ENCODE measurements at regions of chr3 and their contacts with region 1.

Region 1: GRCh38 chr3:134197681-134198261 is 52.9 kb downstream of the RYK start:
- DNase-seq: peak; percentile 68
- H3K27ac ChIP-seq: no peak overlapping the region
- CTCF ChIP-seq: peak; percentile 81

Region 2: DNA sequence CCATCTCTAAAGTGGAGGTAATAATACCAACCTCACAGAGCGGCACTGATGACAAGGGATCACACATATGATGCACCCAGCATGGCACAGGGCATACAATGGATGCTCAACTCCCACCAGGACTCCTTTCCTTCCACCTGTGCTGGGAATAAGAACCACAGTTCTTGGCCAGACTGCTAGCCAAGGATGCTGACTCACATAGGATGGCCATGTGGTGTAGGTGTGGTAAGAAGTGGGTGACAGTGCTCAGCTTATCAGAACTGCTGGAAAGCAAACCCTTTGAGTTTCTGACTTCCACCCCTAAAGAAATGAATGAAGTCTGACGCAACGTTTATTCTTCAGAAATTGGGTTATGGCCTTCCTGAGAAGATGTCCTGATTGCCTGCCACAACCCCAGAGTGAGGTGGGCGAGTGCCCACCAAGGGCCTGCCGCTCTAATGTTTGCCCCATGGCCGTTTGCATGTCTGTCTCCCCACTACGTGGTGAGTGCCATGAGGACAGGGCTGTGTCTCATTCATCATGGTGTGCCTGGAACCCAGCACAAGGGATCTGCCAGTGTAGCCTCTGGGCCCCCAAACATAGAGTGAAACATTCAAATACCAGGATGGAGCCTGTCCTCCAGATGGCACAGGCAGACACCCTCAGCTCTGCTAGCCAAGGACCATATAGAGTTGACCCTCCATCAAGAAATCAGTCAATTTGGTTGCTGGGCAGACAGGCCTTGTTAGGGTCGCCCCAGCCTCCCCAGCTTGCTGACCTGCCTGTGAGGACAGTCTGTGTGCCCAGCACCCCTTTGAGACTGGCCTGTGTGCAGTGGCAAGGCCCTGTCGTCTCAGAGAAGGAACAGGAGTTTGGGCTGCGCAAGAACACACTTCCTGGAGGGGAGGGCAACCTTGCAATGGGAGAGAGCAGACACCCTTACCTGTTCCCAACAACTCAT is 110.5 kb before region 1 on chr3:
- CTCF ChIA-PET with region 1: no interaction called
- POLR2A ChIA-PET with region 1: no interaction called
- DNase-seq: no peak
- H3K27ac ChIP-seq: no peak overlapping the region
- CTCF ChIP-seq: no peak

Region 3: GRCh38 chr3:134212906-134213665 is 15.3 kb after region 1 on chr3:
- CTCF ChIA-PET with region 1: interaction called, 12 read pairs
- POLR2A ChIA-PET with region 1: no interaction called
- DNase-seq: peak; percentile 86
- H3K27ac ChIP-seq: peak overlapping the region; percentile 54
- CTCF ChIP-seq: peak; percentile 95